Activated CD4-positive, alpha-beta T cell treated with anti-CD3 and anti-CD28 coated beads for 36 hours (primary cell): ENCODE measurements at regions of chr1 and their contacts with region 1.

Region 1: GRCh38 chr1:20932437-20932977 is 145.4 kb upstream of the HP1BP3 start:
- DNase-seq: peak; percentile 65
- ATAC-seq: peak; percentile 84
- H3K4me3 Mint-ChIP-seq: peak overlapping the region; percentile 13
- H3K27ac Mint-ChIP-seq: peak overlapping the region; percentile 91
- H3K4me1 Mint-ChIP-seq: peaks cover 37% of the 10 kb centered on the region
- H3K27me3 Mint-ChIP-seq: no peaks in the 10 kb centered on the region

Region 2: GRCh38 chr1:20497506-20497905 is 435.0 kb before region 1 on chr1:
- CTCF ChIA-PET with region 1: no interaction called
- POLR2A ChIA-PET with region 1: no interaction called
- intact Hi-C with region 1: no loop called
- DNase-seq: no peak
- ATAC-seq: no peak
- H3K4me3 Mint-ChIP-seq: no peak overlapping the region
- H3K27ac Mint-ChIP-seq: no peak overlapping the region
- H3K4me1 Mint-ChIP-seq: no peaks in the 10 kb centered on the region
- H3K27me3 Mint-ChIP-seq: peaks cover 3% of the 10 kb centered on the region

Region 3: GRCh38 chr1:20507564-20508410 is 424.7 kb before region 1 on chr1 and contains the start of gene MUL1:
- CTCF ChIA-PET with region 1: no interaction called
- POLR2A ChIA-PET with region 1: no interaction called
- intact Hi-C with region 1: no loop called
- DNase-seq: peak; percentile 96
- ATAC-seq: peak; percentile 96
- H3K4me3 Mint-ChIP-seq: peak within 1 kb of the TSS; percentile 79
- H3K27ac Mint-ChIP-seq: peak within 1 kb of the TSS; percentile 65
- H3K4me1 Mint-ChIP-seq: peaks cover 17% of the 10 kb centered on the region
- H3K27me3 Mint-ChIP-seq: peaks cover 2% of the 10 kb centered on the region
- total RNA-seq, gene MUL1: 9.0 to 13.1 TPM

Region 4: DNA sequence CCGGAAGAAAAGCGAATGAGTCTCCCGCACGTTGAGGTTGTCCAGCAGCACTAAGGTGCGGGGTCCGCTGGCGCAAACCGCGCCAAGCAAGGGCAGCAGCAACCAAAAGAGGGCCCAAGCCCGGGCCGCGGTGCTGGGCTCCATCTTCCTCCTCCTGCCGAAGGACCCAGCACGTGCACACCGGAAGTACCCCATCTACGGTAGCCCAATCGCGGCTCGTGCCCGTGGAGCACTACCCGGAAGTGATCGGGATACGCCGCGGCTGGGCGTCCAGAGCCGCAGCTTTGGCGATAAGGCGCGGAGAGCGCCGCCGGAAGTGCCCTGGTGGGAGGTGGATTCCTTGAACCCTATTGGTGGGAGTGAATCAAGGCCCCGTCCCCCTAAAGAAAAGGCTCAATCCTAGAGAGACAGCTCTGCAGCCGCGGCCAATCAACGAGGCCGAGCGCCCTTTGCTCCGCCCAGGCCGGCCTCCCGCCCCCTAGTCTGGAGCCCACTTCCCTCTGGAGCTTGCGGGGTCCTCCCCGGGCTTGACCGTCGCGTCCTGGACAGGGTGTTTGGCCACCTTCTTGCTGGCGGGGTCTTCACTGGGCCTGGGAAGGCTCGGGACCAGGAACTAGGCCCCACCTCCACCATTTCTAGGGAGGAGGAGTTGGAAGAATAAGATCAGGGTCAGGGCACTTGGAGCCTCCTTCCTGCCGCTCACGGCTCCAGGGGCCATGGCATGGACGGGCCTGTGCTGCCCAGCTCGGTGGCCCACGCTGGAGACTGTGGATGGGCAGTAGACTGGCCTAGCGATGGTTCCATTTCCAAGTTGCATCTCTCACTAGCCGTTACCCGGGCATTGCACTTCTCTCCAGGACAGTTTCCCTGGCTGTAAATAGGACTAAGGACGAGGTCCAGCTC is 271.0 kb before region 1 on chr1 and contains the start of gene DDOST:
- CTCF ChIA-PET with region 1: no interaction called
- POLR2A ChIA-PET with region 1: no interaction called
- intact Hi-C with region 1: loop called in 1 of 2 experiments (anchors 1 kb)
- DNase-seq: peak; percentile 97
- ATAC-seq: peak; percentile 97
- H3K4me3 Mint-ChIP-seq: peak within 1 kb of the TSS; percentile 91
- H3K27ac Mint-ChIP-seq: peak within 1 kb of the TSS; percentile 100
- H3K4me1 Mint-ChIP-seq: peaks cover 35% of the 10 kb centered on the region
- H3K27me3 Mint-ChIP-seq: no peaks in the 10 kb centered on the region
- total RNA-seq, gene DDOST: 112 to 136 TPM

Region 5: GRCh38 chr1:20732588-20733360 is 199.7 kb before region 1 on chr1 and contains the start of gene SH2D5:
- CTCF ChIA-PET with region 1: no interaction called
- POLR2A ChIA-PET with region 1: no interaction called
- intact Hi-C with region 1: loop called in 1 of 2 experiments (anchors 1 kb)
- DNase-seq: peak; percentile 87
- ATAC-seq: peak; percentile 88
- H3K4me3 Mint-ChIP-seq: peak within 1 kb of the TSS; percentile 74
- H3K27ac Mint-ChIP-seq: peak within 1 kb of the TSS; percentile 69
- H3K4me1 Mint-ChIP-seq: peaks cover 17% of the 10 kb centered on the region
- H3K27me3 Mint-ChIP-seq: peaks cover 21% of the 10 kb centered on the region
- total RNA-seq, gene SH2D5: 0.32 to 0.51 TPM

Region 6: DNA sequence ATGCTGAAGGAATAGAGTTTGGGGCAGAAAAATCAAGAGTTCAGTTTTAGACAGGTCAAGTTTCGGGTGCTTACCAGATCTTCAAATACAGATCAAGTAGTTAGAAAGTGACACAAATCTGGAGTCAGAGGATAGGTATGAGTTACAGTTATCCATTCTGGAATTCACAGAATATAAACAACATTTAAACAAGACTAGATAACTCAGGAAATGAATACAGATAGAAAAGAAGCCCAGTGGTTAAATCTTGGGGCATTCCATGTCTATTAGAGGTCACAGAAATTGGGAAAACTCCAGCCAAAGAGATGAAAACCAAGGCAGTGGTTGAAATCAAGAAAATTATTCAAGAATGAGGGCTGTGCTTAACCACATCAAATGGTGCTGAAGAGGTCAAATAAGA is 41.6 kb after region 1 on chr1:
- CTCF ChIA-PET with region 1: no interaction called
- POLR2A ChIA-PET with region 1: no interaction called
- intact Hi-C with region 1: loop called in 1 of 2 experiments (anchors 2 kb)
- DNase-seq: no peak
- ATAC-seq: no peak
- H3K4me3 Mint-ChIP-seq: no peak overlapping the region
- H3K27ac Mint-ChIP-seq: no peak overlapping the region
- H3K4me1 Mint-ChIP-seq: peaks cover 10% of the 10 kb centered on the region
- H3K27me3 Mint-ChIP-seq: no peaks in the 10 kb centered on the region

Region 7: DNA sequence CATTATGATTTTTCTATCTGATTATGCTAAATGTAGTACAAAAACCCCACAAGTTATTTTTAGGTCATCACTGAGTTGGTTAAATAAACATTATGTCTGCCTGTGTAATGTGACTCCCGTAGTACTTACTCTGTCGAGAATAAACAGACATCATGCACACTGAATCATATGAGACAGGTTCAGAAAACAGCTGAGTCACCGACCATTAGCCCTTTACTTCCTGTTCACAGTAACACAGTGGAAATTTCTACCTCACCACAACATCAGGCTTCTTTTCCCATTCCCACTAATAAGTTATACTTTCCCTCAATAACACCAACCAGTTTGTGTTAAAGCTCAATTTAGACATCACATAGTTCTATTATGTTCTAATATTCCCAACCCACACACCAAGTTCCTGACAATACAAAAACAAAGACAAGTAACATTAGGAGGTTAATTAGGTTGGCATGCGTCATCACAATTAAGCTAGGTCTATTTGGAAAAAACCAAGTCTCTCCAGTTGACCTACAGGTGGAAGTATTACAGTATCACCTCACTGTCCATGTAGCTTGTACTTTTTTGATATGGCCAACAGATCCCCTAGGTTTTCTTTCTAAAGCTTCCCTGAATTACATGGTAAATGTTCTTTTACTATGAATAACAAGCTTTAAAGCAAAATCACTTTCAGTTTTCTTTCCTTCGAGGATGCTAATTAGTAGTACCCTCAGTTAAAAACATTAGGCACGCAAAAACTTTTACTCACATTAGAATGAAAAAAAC is 90.0 kb after region 1 on chr1:
- CTCF ChIA-PET with region 1: no interaction called
- POLR2A ChIA-PET with region 1: interaction called, 4 read pairs
- intact Hi-C with region 1: loop called (anchors 1 kb)
- DNase-seq: peak; percentile 57
- ATAC-seq: peak; percentile 99
- H3K4me3 Mint-ChIP-seq: peak overlapping the region; percentile 15
- H3K27ac Mint-ChIP-seq: peak overlapping the region; percentile 88
- H3K4me1 Mint-ChIP-seq: peaks cover 20% of the 10 kb centered on the region
- H3K27me3 Mint-ChIP-seq: no peaks in the 10 kb centered on the region

Region 8: DNA sequence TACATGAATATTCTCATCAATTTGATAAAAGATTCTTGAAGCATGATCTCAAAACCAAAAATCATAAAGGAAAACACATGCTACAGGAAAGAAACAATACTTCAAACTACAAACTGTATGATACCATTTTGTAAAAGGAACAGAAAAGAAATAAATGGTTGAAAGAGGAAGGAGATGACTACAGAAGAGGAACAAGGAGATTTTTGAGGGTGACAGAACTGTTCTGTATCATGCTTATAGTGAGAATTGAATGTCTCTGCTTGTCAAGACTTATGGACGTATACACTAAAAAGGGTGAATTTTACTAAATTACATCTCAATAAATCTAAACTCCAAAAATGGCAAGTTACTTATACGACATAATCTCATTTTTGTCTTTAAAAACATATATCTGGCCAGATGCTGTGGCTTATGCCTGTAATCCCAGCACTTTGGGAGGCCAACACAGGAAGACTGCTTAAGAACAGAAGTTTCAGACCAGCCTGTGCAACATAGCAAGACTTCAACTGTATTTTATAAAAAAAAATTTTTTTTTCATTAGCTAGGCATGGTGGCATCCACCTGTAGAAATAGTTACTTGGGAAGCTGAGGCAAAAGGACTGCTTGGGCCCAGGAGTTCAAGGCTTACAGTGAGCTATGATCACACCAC is 118.8 kb after region 1 on chr1:
- CTCF ChIA-PET with region 1: no interaction called
- POLR2A ChIA-PET with region 1: no interaction called
- intact Hi-C with region 1: no loop called
- DNase-seq: no peak
- ATAC-seq: no peak
- H3K4me3 Mint-ChIP-seq: no peak overlapping the region
- H3K27ac Mint-ChIP-seq: no peak overlapping the region
- H3K4me1 Mint-ChIP-seq: no peaks in the 10 kb centered on the region
- H3K27me3 Mint-ChIP-seq: no peaks in the 10 kb centered on the region